CD8-positive, alpha-beta T cell (primary cell): ENCODE measurements at regions of chr2 and their contacts with region 1.

Region 1: DNA sequence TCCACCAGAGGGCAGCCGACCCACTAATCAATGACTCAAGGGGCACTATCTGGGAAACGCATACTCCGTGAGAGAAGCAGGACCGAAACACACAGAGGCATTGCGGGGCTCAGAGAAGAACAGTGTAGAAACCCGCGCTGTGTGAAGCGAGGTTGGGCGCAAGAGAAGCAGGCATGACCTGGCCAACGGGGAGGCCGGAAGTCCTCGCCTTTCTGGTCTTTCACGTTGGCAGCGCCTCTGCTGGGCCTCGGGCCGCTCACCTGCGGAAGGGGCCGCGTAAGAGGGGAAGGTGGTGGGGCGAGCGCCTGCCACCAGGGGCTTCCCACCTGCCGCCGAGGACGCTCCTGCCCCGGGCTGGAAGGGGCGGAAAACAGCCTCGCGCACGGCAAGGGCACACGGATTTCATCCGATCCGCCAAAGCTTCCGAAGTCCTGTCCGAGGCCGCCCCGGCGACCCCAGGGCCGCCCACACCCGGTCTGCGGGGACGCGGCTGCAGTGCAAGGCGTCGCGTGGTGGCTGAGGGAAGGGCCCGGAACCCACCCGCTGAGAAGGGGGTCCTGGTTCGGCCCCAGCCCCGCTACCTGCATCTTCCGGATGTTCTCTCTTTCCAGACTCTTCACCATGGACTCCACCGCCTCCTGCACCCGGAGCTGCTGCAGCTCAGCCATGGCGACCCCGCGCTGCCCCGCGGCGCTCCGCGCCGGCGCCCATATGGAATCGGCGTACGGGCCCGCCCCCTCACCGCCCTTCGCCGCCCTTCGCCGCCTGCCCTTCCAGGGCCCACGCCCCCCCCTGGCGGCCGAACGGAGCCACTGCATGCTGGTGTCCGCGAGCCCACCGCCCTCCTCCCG is at the start of gene FAM136A:
- DNase-seq: peak; percentile 78 to 93 (median 88)
- ATAC-seq: peak; percentile 93
- H3K4me3 ChIP-seq: peak within 1 kb of the TSS; percentile 85 to 94
- H3K4me3 Mint-ChIP-seq: peak within 1 kb of the TSS; percentile 89
- H3K27ac ChIP-seq: peak within 1 kb of the TSS; percentile 77 to 80
- H3K27ac Mint-ChIP-seq: peak within 1 kb of the TSS; percentile 93
- H3K4me1 ChIP-seq: peaks cover 16% of the 10 kb centered on the region
- H3K4me1 Mint-ChIP-seq: peaks cover 29% of the 10 kb centered on the region
- H3K27me3 ChIP-seq: no peaks in the 10 kb centered on the region
- H3K27me3 Mint-ChIP-seq: no peaks in the 10 kb centered on the region
- CTCF ChIP-seq: peak; percentile 87
- total RNA-seq, gene FAM136A: 30.8 to 30.9 TPM

Region 2: DNA sequence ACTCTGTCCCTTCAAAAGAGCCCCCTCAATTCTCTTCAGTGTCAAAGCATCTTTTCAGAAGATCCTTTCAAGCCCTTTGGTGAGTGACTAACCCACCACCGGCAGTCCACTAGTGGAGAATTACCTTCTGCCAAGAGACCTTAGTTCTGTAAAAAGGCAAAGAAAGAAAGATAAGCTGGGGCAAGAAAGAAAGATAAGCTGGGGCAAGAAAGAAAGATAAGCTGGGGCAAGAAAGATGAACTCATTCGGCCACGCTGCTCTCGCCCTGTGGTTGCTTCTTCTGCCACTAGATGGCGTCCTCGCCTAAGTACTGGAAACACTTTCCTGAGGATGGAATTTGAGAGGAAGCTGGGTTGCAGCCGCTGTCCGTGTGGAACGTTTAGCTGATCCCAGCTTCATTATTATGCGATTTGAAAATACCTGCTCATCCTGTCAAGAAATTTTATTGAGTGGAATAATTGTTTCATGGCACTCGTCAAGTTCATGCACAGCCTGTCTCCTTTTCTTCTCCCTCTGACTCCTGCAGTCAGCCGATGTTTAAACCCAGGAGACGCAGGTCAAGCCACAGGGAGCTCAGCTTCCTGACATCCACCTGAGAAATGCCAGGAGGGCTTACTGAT is 576.9 kb before region 1 on chr2:
- CTCF ChIA-PET with region 1: interaction called, 9 read pairs
- POLR2A ChIA-PET with region 1: no interaction called
- intact Hi-C with region 1: loop called (anchors 1 to 5 kb)
- DNase-seq: peak; percentile 61 to 90 (median 84)
- ATAC-seq: peak; percentile 88
- H3K4me3 ChIP-seq: no peak overlapping the region
- H3K4me3 Mint-ChIP-seq: peak overlapping the region; percentile 52
- H3K27ac ChIP-seq: no peak overlapping the region
- H3K27ac Mint-ChIP-seq: no peak overlapping the region
- H3K4me1 ChIP-seq: peaks cover 4% of the 10 kb centered on the region
- H3K4me1 Mint-ChIP-seq: peaks cover 6% of the 10 kb centered on the region
- H3K27me3 ChIP-seq: no peaks in the 10 kb centered on the region
- H3K27me3 Mint-ChIP-seq: no peaks in the 10 kb centered on the region
- CTCF ChIP-seq: peak; percentile 97

Region 3: DNA sequence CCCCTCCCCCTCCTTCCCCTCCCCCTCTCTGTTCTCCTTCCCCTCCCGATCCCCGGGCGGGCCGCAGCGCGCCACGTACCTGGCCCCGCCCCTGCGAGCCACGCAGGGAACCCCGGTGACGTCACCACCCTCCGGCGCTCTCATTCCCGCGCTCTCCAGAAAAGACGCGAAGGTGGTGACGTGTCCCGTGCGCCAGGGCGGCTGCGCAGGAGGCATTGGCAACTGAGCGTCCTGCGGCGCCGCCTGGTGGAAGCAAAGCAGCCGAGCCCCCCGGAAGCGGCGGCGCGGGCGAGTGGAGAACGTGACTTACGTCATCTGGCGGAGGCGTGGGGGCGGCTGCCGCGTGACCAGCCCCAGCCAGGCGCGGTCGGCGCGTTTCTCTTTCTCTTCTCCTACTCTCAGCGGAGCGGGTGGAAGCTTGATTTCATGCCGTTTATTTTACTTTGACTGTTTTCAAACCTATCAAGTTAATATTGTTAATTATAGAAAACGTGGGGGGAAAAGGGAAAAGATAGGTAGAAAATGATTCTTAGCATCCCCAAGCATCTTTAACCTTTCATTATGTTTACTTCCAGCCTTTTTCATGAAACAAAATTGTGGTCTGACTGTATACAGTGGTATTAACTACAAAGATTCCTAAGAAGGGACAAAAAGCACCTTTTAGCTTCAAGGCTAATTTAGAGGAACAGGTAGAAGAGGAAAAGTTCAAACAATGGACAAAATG is 158.8 kb before region 1 on chr2:
- CTCF ChIA-PET with region 1: interaction called, 4 read pairs
- POLR2A ChIA-PET with region 1: no interaction called
- intact Hi-C with region 1: loop called in 1 of 2 experiments (anchors 2 kb)
- DNase-seq: peak; percentile 99 to 100 (median 100)
- ATAC-seq: peak; percentile 73
- H3K4me3 ChIP-seq: peak overlapping the region; percentile 54 to 56
- H3K4me3 Mint-ChIP-seq: peak overlapping the region; percentile 91
- H3K27ac ChIP-seq: peak overlapping the region; percentile 89 to 97
- H3K27ac Mint-ChIP-seq: peak overlapping the region; percentile 100
- H3K4me1 ChIP-seq: peaks cover 49% of the 10 kb centered on the region
- H3K4me1 Mint-ChIP-seq: peaks cover 53% of the 10 kb centered on the region
- H3K27me3 ChIP-seq: no peaks in the 10 kb centered on the region
- H3K27me3 Mint-ChIP-seq: no peaks in the 10 kb centered on the region
- CTCF ChIP-seq: peak; percentile 89

Region 4: GRCh38 chr2:70270323-70270722 is 31.2 kb before region 1 on chr2:
- CTCF ChIA-PET with region 1: no interaction called
- POLR2A ChIA-PET with region 1: no interaction called
- intact Hi-C with region 1: no loop called
- DNase-seq: no peak
- ATAC-seq: no peak
- H3K4me3 ChIP-seq: no peak overlapping the region
- H3K4me3 Mint-ChIP-seq: no peak overlapping the region
- H3K27ac ChIP-seq: no peak overlapping the region
- H3K27ac Mint-ChIP-seq: no peak overlapping the region
- H3K4me1 ChIP-seq: no peaks in the 10 kb centered on the region
- H3K4me1 Mint-ChIP-seq: peaks cover 16% of the 10 kb centered on the region
- H3K27me3 ChIP-seq: no peaks in the 10 kb centered on the region
- H3K27me3 Mint-ChIP-seq: no peaks in the 10 kb centered on the region
- CTCF ChIP-seq: no peak

Region 5: GRCh38 chr2:70340921-70341765 is 39.6 kb after region 1 on chr2:
- CTCF ChIA-PET with region 1: interaction called, 16 read pairs
- POLR2A ChIA-PET with region 1: no interaction called
- intact Hi-C with region 1: loop called in 1 of 2 experiments (anchors 2 kb)
- DNase-seq: peak in 7 of 9 experiments; percentile 7 to 62 (median 36)
- ATAC-seq: peak; percentile 51
- H3K4me3 ChIP-seq: no peak overlapping the region
- H3K4me3 Mint-ChIP-seq: no peak overlapping the region
- H3K27ac ChIP-seq: no peak overlapping the region
- H3K27ac Mint-ChIP-seq: no peak overlapping the region
- H3K4me1 ChIP-seq: no peaks in the 10 kb centered on the region
- H3K4me1 Mint-ChIP-seq: no peaks in the 10 kb centered on the region
- H3K27me3 ChIP-seq: no peaks in the 10 kb centered on the region
- H3K27me3 Mint-ChIP-seq: peaks cover 8% of the 10 kb centered on the region
- CTCF ChIP-seq: peak; percentile 94

Region 6: DNA sequence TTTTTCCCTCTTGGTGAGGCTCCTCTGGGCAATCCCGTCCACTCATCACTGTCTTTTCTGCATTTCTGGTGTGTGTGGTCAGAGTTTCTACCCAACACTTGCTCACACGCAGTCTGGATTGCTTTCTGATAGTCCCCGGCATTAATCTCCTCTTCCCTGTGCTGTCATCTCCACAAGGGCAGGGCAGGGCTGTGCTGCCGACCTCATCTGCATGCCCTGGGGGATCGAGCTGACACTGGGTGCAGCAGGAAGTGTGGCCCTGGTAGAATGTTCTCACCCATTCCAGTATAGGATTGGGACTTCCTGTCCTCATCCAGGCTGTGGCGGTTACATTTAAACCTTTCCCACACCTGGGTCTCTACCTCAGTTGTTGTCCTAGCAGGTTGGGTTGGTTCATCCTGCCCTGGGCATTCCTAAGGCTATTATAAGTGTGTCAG is 80.3 kb after region 1 on chr2:
- CTCF ChIA-PET with region 1: no interaction called
- POLR2A ChIA-PET with region 1: no interaction called
- intact Hi-C with region 1: no loop called
- DNase-seq: no peak
- ATAC-seq: no peak
- H3K4me3 ChIP-seq: no peak overlapping the region
- H3K4me3 Mint-ChIP-seq: no peak overlapping the region
- H3K27ac ChIP-seq: no peak overlapping the region
- H3K27ac Mint-ChIP-seq: no peak overlapping the region
- H3K4me1 ChIP-seq: no peaks in the 10 kb centered on the region
- H3K4me1 Mint-ChIP-seq: no peaks in the 10 kb centered on the region
- H3K27me3 ChIP-seq: no peaks in the 10 kb centered on the region
- H3K27me3 Mint-ChIP-seq: peaks cover 4% of the 10 kb centered on the region
- CTCF ChIP-seq: no peak

Region 7: GRCh38 chr2:70647873-70648481 is 346.4 kb after region 1 on chr2:
- CTCF ChIA-PET with region 1: interaction called, 88 read pairs
- POLR2A ChIA-PET with region 1: no interaction called
- intact Hi-C with region 1: loop called (anchors 1 kb)
- DNase-seq: peak; percentile 55 to 83 (median 72)
- ATAC-seq: peak; percentile 96
- H3K4me3 ChIP-seq: no peak overlapping the region
- H3K4me3 Mint-ChIP-seq: no peak overlapping the region
- H3K27ac ChIP-seq: no peak overlapping the region
- H3K27ac Mint-ChIP-seq: no peak overlapping the region
- H3K4me1 ChIP-seq: no peaks in the 10 kb centered on the region
- H3K4me1 Mint-ChIP-seq: no peaks in the 10 kb centered on the region
- H3K27me3 ChIP-seq: no peaks in the 10 kb centered on the region
- H3K27me3 Mint-ChIP-seq: peaks cover 6% of the 10 kb centered on the region
- CTCF ChIP-seq: peak; percentile 94

Region 8: DNA sequence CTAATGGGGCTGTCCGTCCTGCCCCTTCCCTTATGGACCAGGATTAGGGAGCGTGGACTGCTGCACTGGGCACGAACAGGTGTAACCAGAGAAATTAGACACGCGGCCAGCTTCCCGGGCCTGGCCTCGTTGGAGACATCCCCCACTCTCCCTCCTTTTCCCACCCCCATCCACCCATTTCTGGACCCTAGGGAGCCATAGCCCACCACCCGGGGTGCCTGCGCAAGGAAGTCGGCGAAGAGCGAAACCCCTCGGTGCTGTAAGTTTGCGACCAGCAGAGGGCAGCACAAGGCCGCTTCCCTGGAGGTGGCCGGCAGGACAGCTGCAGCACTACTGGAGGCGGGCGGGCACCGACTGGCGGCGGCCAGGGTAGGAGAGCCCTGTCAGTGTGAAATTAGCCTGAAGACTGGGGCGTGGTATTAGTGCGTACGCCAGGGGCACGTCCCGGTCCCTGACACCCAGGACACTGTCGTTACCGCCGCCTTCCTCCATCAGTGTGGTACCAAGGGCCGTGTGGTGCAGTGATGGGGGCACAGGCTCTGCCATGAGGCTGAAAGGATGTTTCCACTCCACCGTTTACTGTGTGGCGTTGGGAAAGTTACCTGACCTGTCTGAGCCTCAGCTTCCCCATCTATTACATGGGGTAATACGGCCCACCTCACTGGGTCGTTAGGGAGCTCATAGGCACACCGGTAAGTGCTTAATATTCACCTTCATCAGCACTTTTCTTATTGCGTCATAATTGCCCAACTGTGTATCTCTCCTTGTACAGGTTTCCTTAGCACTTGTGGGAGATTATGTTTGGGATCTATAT is 570.0 kb after region 1 on chr2:
- CTCF ChIA-PET with region 1: no interaction called
- POLR2A ChIA-PET with region 1: no interaction called
- intact Hi-C with region 1: loop called (anchors 5 to 10 kb)
- DNase-seq: peak; percentile 60 to 88 (median 82)
- ATAC-seq: peak; percentile 94
- H3K4me3 ChIP-seq: peak overlapping the region in 1 of 2 experiments; percentile 21
- H3K4me3 Mint-ChIP-seq: peak overlapping the region; percentile 22
- H3K27ac ChIP-seq: no peak overlapping the region
- H3K27ac Mint-ChIP-seq: no peak overlapping the region
- H3K4me1 ChIP-seq: peaks cover 8% of the 10 kb centered on the region
- H3K4me1 Mint-ChIP-seq: peaks cover 5% of the 10 kb centered on the region
- H3K27me3 ChIP-seq: peaks cover 11 to 18% of the 10 kb centered on the region in 2 experiments
- H3K27me3 Mint-ChIP-seq: peaks cover 44% of the 10 kb centered on the region
- CTCF ChIP-seq: peak; percentile 97

Region 9: DNA sequence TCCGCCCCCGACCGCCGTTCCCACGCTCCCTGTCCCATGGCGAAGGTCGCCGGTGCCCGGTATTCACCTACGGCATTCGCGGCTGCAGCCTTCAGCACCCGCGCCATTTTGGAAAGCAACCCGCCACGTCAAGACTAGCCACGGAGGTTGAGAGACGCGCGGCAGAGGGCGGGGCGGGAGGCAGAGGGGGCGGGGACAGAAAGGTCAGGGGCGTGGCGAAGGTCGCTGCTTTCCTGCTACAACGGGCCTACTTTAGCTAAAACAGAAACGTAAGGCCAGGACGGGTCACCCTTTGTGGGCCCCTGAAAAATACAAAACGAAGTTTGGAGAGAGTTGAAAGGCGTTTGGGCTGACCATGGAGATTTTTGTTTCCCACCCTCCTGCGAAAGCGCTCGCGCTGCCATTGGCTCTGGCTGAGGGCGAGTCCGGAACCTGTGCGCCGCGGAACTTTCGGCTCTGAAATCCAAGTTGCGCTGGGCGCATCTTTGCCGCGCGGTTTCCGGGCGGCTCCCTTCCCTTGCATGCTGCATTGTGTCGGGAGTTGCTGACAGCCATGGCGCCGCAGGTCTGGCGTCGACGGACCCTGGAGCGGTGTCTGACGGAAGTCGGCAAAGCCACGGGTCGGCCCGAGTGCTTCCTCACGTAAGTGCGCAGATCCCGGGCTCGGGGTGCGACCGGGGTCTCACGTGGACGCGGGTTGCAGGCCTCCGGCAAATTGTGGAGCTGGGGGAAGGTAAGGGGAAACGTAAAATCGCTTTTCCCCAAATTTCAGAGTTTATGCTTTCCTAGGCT is 828.7 kb after region 1 on chr2 and contains the starts of genes MCEE and MPHOSPH10:
- CTCF ChIA-PET with region 1: no interaction called
- POLR2A ChIA-PET with region 1: no interaction called
- intact Hi-C with region 1: loop called in 1 of 2 experiments (anchors 10 kb)
- DNase-seq: peak; percentile 81 to 92 (median 90)
- ATAC-seq: peak; percentile 90
- H3K4me3 ChIP-seq: peak within 1 kb of the TSS; percentile 75 to 96
- H3K4me3 Mint-ChIP-seq: no peak within 1 kb of the TSS
- H3K27ac ChIP-seq: peak within 1 kb of the TSS; percentile 87 to 89
- H3K27ac Mint-ChIP-seq: no peak within 1 kb of the TSS
- H3K4me1 ChIP-seq: peaks cover 27% of the 10 kb centered on the region
- H3K4me1 Mint-ChIP-seq: peaks cover 19% of the 10 kb centered on the region
- H3K27me3 ChIP-seq: no peaks in the 10 kb centered on the region
- H3K27me3 Mint-ChIP-seq: no peaks in the 10 kb centered on the region
- CTCF ChIP-seq: no peak
- total RNA-seq, gene MCEE: 7.1 to 7.3 TPM
- total RNA-seq, gene MPHOSPH10: 51.4 to 57.9 TPM